Activated T-helper 2 cell treated with anti-CD3 and anti-CD28 coated beads, Interferon-gamma antibody, Interleukin-2, Interleukin-4, amounts not matched to agents 10 μg/mL and 5 μg/mL and 100 μg/mL, durations not matched to agents 14 hours and 24 hours and 36 hours (primary cell): ENCODE measurements at regions of chr12 and their contacts with region 1.

Region 1: DNA sequence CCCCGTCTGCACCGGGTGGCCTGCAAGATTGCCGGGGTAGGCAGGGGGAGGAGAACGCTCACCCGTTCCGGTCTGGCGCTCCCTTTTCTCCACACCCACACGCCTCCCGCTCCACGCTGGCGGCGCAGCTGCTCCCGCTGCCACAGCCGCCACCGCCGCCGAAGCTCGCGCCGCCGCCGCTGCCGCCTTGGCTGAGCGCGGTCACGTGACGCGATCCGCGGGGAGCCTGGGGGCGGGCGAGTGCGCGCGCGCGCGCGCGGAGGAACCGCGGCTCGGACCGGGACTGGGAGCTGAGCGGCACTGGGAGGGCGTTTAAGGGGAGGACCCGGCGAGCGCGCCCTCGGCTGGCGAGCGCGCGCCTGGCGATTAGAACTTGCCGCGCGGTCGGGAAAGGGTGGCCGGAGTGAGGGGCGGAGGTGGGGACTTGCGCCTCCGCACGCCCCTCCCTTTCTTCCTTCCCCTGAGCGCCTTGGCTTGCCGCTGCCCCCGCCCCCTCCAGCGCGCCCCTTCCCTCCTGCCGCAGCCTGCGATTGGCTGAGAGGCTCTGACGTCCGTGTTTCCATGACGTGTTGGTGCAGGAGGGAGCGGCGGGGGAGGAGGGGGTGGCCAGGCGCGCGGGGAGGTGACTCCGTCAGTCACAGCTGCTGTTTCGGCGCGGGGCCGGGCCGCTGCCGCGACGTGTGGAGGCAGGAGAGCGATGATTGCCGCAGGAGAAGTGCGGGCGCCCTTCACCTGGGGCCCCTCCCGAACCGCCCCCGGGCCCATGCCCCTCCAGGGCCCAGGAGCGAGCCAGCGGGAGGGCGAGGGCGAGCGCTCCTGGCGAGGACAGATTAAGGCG is 738 bp upstream of the ATP2B1 start:
- DNase-seq: peak; percentile 97
- H3K4me3 Mint-ChIP-seq: peak overlapping the region; percentile 82
- H3K27ac Mint-ChIP-seq: peak overlapping the region; percentile 83
- H3K4me1 Mint-ChIP-seq: peaks cover 35% of the 10 kb centered on the region
- H3K27me3 Mint-ChIP-seq: peaks cover 47% of the 10 kb centered on the region

Region 2: GRCh38 chr12:89352492-89353187 is 356.7 kb before region 1 on chr12 and contains the start of gene DUSP6:
- intact Hi-C with region 1: loop called (anchors 1 kb)
- DNase-seq: peak; percentile 96
- H3K4me3 Mint-ChIP-seq: peak within 1 kb of the TSS; percentile 97
- H3K27ac Mint-ChIP-seq: peak within 1 kb of the TSS; percentile 97
- H3K4me1 Mint-ChIP-seq: peaks cover 38% of the 10 kb centered on the region
- H3K27me3 Mint-ChIP-seq: no peaks in the 10 kb centered on the region
- total RNA-seq, gene DUSP6: 75.7 and 82.0 TPM in 2 replicates

Region 3: DNA sequence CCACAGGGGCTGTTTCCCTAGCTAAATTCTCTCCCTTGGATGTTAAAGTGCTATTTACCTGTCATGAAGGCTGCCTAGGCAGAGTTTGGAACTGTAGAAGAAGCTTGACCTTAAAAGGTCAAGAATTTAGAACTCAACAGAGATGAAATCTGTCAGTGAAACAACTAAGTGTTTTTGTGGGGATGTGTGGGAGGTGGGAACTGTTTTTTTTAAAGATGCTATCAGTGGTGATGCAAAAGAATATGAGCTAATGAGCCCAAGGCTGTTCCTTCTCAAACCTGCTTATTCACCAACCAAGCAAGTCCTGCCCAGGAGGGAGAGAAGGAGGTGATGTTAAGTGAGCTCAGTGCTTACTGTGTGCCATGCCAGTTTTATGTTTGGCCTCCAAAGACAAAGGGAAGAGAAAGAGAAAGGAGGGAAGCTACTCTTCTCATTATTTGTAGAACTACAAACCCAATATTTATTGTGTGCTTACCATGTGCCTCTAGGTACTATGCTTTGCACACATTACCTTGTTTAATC is 142.7 kb before region 1 on chr12:
- intact Hi-C with region 1: loop called (anchors 2 kb)
- DNase-seq: no peak
- H3K4me3 Mint-ChIP-seq: no peak overlapping the region
- H3K27ac Mint-ChIP-seq: peak overlapping the region; percentile 56
- H3K4me1 Mint-ChIP-seq: peaks cover 42% of the 10 kb centered on the region
- H3K27me3 Mint-ChIP-seq: peaks cover 3% of the 10 kb centered on the region

Region 4: GRCh38 chr12:89731614-89732013 is 22.2 kb after region 1 on chr12:
- intact Hi-C with region 1: no loop called
- DNase-seq: no peak
- H3K4me3 Mint-ChIP-seq: no peak overlapping the region
- H3K27ac Mint-ChIP-seq: no peak overlapping the region
- H3K4me1 Mint-ChIP-seq: peaks cover 9% of the 10 kb centered on the region
- H3K27me3 Mint-ChIP-seq: no peaks in the 10 kb centered on the region

Region 5: DNA sequence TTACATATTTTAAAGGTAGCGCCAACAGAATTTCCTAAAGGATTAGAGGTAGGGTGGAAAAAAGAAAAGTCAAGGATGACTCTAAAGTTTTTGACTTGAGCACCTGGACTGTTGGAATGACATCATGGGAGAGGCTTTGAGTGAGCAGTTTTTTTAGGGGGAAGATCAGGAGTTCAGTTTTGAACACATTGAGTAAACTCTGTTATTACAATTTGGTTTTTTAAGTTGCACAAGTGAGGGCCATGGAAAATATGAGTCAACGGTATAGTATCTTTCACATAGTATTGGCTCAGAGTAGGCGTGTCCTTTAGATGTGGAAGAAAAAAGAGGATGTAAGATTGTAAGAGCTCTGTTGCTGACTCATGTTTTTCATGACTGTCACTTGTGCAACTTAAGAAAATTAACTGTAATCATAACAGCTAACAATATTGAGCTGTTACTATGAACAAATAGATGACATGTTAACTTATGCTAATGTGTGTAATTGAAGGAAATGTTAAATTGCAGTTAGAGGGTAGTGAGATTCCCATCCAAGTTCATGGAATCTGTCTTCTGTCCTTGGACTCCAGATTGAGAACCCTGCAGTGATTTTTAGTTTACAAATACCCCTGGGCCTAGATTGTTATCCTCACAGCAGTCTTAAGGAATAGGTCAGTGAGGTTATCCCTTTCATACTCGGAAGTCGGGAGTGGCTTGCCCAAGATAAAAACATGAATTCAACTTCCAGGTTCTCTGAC is 47.4 kb after region 1 on chr12:
- intact Hi-C with region 1: loop called (anchors 1 kb)
- DNase-seq: peak; percentile 27
- H3K4me3 Mint-ChIP-seq: no peak overlapping the region
- H3K27ac Mint-ChIP-seq: peak overlapping the region; percentile 56
- H3K4me1 Mint-ChIP-seq: peaks cover 28% of the 10 kb centered on the region
- H3K27me3 Mint-ChIP-seq: peaks cover 2% of the 10 kb centered on the region

Region 6: DNA sequence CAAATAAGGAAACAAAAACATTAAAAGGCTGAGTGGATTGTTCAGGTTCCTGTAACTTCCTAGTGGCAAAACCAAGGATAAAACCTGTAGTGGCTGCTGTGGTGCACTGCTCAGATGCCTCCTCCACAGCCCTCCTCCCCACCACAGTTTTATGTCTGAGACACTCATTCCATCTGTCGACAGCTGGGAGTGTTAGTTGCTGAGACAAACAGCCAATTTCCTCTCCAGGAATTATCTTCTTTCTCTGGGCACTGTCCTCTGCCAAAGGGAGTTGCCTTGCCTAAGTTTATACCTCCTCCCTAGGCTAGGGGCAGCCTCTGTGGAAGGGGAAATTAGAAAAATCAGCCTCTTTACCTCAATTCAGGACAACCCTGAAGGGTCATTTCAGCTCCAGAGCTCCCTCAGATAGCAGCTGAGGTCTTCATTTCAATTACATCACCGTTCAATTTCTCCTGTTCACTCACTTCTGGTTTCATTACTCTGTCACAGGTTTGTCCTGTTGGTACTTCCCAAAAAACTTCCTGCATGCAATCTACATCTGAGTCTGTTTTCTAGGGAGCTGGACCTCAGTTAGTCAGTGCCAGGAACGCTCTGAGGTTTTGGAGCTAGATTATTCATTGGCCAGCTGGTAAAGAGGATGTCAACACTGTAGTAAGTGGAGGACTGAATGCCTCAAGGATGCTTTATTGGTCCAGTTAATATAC is 74.1 kb after region 1 on chr12:
- intact Hi-C with region 1: no loop called
- DNase-seq: no peak
- H3K4me3 Mint-ChIP-seq: no peak overlapping the region
- H3K27ac Mint-ChIP-seq: no peak overlapping the region
- H3K4me1 Mint-ChIP-seq: no peaks in the 10 kb centered on the region
- H3K27me3 Mint-ChIP-seq: peaks cover 2% of the 10 kb centered on the region

Region 7: GRCh38 chr12:89960011-89960507 is 250.7 kb after region 1 on chr12:
- intact Hi-C with region 1: loop called (anchors 5 kb)
- DNase-seq: no peak
- H3K4me3 Mint-ChIP-seq: no peak overlapping the region
- H3K27ac Mint-ChIP-seq: no peak overlapping the region
- H3K4me1 Mint-ChIP-seq: peaks cover 17% of the 10 kb centered on the region
- H3K27me3 Mint-ChIP-seq: peaks cover 17% of the 10 kb centered on the region

Region 8: GRCh38 chr12:89971881-89972280 is 262.5 kb after region 1 on chr12:
- intact Hi-C with region 1: no loop called
- DNase-seq: no peak
- H3K4me3 Mint-ChIP-seq: no peak overlapping the region
- H3K27ac Mint-ChIP-seq: no peak overlapping the region
- H3K4me1 Mint-ChIP-seq: peaks cover 2% of the 10 kb centered on the region
- H3K27me3 Mint-ChIP-seq: peaks cover 9% of the 10 kb centered on the region